CD8-positive, alpha-beta memory T cell (primary cell): ENCODE measurements at regions of chr5 and their contacts with region 1.

Region 1: GRCh38 chr5:115575167-115576070 is 26.9 kb downstream of the TICAM2 start:
- DNase-seq: no peak
- H3K4me3 ChIP-seq: no peak overlapping the region
- H3K4me3 Mint-ChIP-seq: no peak overlapping the region
- H3K27ac ChIP-seq: no peak overlapping the region
- H3K27ac Mint-ChIP-seq: no peak overlapping the region
- H3K4me1 ChIP-seq: no peaks in the 10 kb centered on the region
- H3K4me1 Mint-ChIP-seq: no peaks in the 10 kb centered on the region
- H3K27me3 ChIP-seq: no peaks in the 10 kb centered on the region
- H3K27me3 Mint-ChIP-seq: peaks cover 0 to 4% of the 10 kb centered on the region in 2 donors

Region 2: GRCh38 chr5:115309751-115310370 is 265.6 kb before region 1 on chr5:
- CTCF ChIA-PET with region 1: interaction called, 102 read pairs
- POLR2A ChIA-PET with region 1: interaction called, 3 read pairs
- DNase-seq: peak in 2 of 5 donors; percentile 27 to 41
- H3K4me3 ChIP-seq: no peak overlapping the region
- H3K4me3 Mint-ChIP-seq: no peak overlapping the region
- H3K27ac ChIP-seq: no peak overlapping the region
- H3K27ac Mint-ChIP-seq: no peak overlapping the region
- H3K4me1 ChIP-seq: no peaks in the 10 kb centered on the region
- H3K4me1 Mint-ChIP-seq: no peaks in the 10 kb centered on the region
- H3K27me3 ChIP-seq: no peaks in the 10 kb centered on the region
- H3K27me3 Mint-ChIP-seq: peaks cover 5 to 51% of the 10 kb centered on the region in 2 donors

Region 3: DNA sequence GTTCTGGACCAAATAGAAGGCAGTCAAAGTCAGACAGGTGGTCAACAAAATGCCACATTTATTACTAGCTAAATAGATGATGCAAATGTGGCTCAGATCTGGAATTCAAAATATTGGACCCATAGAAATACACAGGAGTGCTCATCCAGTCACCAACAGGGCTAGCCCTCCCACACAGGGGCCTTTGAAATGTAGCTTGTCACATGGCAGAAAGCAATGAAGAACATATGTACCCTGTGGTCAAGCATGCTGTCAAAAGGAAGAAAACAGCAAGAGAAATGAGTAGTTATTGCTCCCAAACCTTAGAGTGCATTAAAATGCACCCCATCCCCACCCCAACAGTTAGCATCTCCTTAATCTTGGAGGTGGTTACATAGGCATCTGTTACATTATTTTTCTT is 258.1 kb before region 1 on chr5:
- CTCF ChIA-PET with region 1: interaction called, 102 read pairs
- POLR2A ChIA-PET with region 1: no interaction called
- DNase-seq: no peak
- H3K4me3 ChIP-seq: no peak overlapping the region
- H3K4me3 Mint-ChIP-seq: no peak overlapping the region
- H3K27ac ChIP-seq: no peak overlapping the region
- H3K27ac Mint-ChIP-seq: no peak overlapping the region
- H3K4me1 ChIP-seq: no peaks in the 10 kb centered on the region
- H3K4me1 Mint-ChIP-seq: no peaks in the 10 kb centered on the region
- H3K27me3 ChIP-seq: no peaks in the 10 kb centered on the region
- H3K27me3 Mint-ChIP-seq: peaks cover 2 to 27% of the 10 kb centered on the region in 2 donors

Region 4: GRCh38 chr5:115544436-115545350 is 30.7 kb before region 1 on chr5 and contains the start of gene FEM1C:
- CTCF ChIA-PET with region 1: interaction called, 5 read pairs
- POLR2A ChIA-PET with region 1: interaction called, 16 read pairs
- DNase-seq: peak; percentile 91 to 98 (median 95)
- H3K4me3 ChIP-seq: peak within 1 kb of the TSS; percentile 74
- H3K4me3 Mint-ChIP-seq: peak within 1 kb of the TSS; percentile 94 to 100 (median 97)
- H3K27ac ChIP-seq: peak within 1 kb of the TSS; percentile 91
- H3K27ac Mint-ChIP-seq: peak within 1 kb of the TSS; percentile 93 to 100 (median 98)
- H3K4me1 ChIP-seq: peaks cover 43% of the 10 kb centered on the region
- H3K4me1 Mint-ChIP-seq: peaks cover 45 to 50% (median 49%) of the 10 kb centered on the region in 3 donors
- H3K27me3 ChIP-seq: no peaks in the 10 kb centered on the region
- H3K27me3 Mint-ChIP-seq: peaks cover 0 to 2% of the 10 kb centered on the region in 2 donors
- total RNA-seq, gene FEM1C: 14.1 to 14.7 TPM

Region 5: GRCh38 chr5:115559524-115559923 is 15.9 kb before region 1 on chr5:
- CTCF ChIA-PET with region 1: interaction called, 11 read pairs
- POLR2A ChIA-PET with region 1: interaction called, 3 read pairs
- DNase-seq: no peak
- H3K4me3 ChIP-seq: no peak overlapping the region
- H3K4me3 Mint-ChIP-seq: no peak overlapping the region
- H3K27ac ChIP-seq: no peak overlapping the region
- H3K27ac Mint-ChIP-seq: no peak overlapping the region
- H3K4me1 ChIP-seq: no peaks in the 10 kb centered on the region
- H3K4me1 Mint-ChIP-seq: no peaks in the 10 kb centered on the region
- H3K27me3 ChIP-seq: peaks cover 3% of the 10 kb centered on the region
- H3K27me3 Mint-ChIP-seq: peaks cover 10 to 24% of the 10 kb centered on the region in 2 donors

Region 6: GRCh38 chr5:115686051-115686737 is 110.8 kb after region 1 on chr5:
- CTCF ChIA-PET with region 1: no interaction called
- POLR2A ChIA-PET with region 1: no interaction called
- DNase-seq: no peak
- H3K4me3 ChIP-seq: no peak overlapping the region
- H3K4me3 Mint-ChIP-seq: no peak overlapping the region
- H3K27ac ChIP-seq: no peak overlapping the region
- H3K27ac Mint-ChIP-seq: no peak overlapping the region
- H3K4me1 ChIP-seq: no peaks in the 10 kb centered on the region
- H3K4me1 Mint-ChIP-seq: no peaks in the 10 kb centered on the region
- H3K27me3 ChIP-seq: no peaks in the 10 kb centered on the region
- H3K27me3 Mint-ChIP-seq: peaks cover 7 to 38% of the 10 kb centered on the region in 2 donors